Activated CD4-positive, alpha-beta memory T cell treated with anti-CD3 and anti-CD28 coated beads for 36 hours (primary cell): ENCODE measurements at regions of chr6 and their contacts with region 1.

Region 1: DNA sequence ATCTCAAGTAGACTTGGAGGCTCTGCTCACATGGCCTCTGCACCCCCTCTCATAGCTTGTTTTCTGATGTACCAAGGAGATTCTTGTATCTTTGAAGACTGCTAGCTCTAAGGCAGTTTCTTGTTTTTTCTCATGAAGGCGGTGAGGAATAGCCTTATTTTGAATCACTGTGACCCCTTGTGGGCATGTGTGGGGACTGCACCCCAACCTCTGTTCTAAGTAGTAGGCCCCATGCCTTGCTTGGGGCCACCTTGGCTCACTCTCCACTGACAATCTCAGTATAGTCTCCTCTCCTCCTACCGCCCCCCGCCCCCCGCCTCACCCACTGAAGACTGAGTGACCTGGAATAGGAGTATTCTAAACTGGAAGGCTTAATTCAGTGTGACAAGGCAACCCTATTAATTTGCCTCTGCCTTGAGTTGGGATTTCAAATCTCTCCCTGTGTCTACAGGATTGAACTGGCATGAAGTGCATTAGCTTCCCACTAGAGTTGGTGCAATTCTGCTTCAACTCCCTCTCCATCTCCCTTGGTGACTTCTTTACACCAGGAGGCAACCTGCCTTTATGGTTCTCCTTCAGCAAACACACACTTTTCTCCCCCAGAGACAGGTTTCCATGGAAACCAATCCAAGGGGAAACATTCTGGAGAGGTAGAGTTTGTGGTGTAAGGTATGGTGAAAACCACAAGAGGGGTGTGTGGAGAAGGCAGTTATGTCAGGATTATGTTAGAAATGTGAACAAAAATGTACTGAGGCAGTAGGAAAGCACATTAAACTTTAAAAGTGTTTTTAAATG is 75.5 kb upstream of the ECI2 start:
- DNase-seq: peak; percentile 77
- H3K4me3 Mint-ChIP-seq: no peak overlapping the region
- H3K27ac Mint-ChIP-seq: no peak overlapping the region
- H3K4me1 Mint-ChIP-seq: peaks cover 13% of the 10 kb centered on the region
- H3K27me3 Mint-ChIP-seq: peaks cover 2% of the 10 kb centered on the region

Region 2: DNA sequence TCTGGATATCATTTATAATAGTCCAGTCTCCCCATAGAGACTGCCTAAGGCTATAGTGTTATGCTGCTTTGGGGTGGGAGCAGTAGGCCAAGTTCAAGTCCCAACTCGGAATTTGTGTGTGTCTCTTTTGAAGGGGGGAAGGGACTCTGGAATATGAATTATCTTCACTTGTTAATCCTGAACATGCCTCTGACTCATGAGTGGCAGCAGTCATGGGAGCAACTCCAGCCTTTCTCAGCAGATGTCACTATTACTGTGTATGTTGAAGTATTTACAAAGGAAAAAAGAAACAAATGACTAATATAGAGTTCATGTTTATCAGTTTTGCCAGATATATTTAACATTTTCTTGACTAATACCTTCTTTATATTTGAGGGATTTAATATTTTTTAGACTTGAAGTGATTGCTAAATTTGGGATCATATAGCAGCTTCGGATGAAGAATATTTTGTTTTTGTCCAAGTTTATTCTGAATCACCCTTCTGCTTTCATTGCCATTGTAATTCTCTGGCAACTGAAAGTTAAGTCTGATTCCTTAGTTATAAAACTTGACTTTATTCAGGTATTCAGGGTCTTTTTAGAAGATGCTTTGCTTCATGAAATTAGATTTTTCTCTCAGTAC is 155.3 kb before region 1 on chr6:
- CTCF ChIA-PET with region 1: interaction called, 5 read pairs
- POLR2A ChIA-PET with region 1: no interaction called
- intact Hi-C with region 1: loop called (anchors 5 kb)
- DNase-seq: no peak
- H3K4me3 Mint-ChIP-seq: no peak overlapping the region
- H3K27ac Mint-ChIP-seq: no peak overlapping the region
- H3K4me1 Mint-ChIP-seq: peaks cover 30% of the 10 kb centered on the region
- H3K27me3 Mint-ChIP-seq: no peaks in the 10 kb centered on the region

Region 3: DNA sequence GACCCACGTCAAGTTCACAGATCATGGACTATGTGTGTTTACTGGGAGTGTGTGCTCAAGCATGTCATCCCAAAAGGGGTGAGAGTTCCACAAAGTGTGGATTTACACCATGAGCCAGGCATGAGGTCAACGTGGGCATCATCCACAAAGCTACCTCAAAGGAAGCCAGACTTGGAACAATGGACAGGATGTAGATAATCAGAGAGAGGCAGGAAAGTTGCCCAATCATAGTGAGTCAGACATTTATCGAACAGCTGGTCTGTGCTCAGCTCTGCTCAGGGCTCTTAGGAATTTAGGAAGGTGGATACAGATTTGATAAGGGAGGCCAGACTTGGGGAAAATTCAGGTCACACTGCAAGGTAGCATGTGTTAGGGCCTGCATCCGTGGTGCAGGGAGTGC is 248.2 kb after region 1 on chr6:
- CTCF ChIA-PET with region 1: no interaction called
- POLR2A ChIA-PET with region 1: no interaction called
- intact Hi-C with region 1: no loop called
- DNase-seq: no peak
- H3K4me3 Mint-ChIP-seq: no peak overlapping the region
- H3K27ac Mint-ChIP-seq: no peak overlapping the region
- H3K4me1 Mint-ChIP-seq: no peaks in the 10 kb centered on the region
- H3K27me3 Mint-ChIP-seq: peaks cover 1% of the 10 kb centered on the region